AG04449 (cell line): ENCODE measurements at regions of chrX and their contacts with region 1.

Region 1: GRCh38 chrX:57821703-57822375 is 88.4 kb downstream of the ZXDA start:
- DNase-seq: peak; percentile 0
- H3K4me3 ChIP-seq: no peak overlapping the region
- CTCF ChIP-seq: peak; percentile 37

Region 2: DNA sequence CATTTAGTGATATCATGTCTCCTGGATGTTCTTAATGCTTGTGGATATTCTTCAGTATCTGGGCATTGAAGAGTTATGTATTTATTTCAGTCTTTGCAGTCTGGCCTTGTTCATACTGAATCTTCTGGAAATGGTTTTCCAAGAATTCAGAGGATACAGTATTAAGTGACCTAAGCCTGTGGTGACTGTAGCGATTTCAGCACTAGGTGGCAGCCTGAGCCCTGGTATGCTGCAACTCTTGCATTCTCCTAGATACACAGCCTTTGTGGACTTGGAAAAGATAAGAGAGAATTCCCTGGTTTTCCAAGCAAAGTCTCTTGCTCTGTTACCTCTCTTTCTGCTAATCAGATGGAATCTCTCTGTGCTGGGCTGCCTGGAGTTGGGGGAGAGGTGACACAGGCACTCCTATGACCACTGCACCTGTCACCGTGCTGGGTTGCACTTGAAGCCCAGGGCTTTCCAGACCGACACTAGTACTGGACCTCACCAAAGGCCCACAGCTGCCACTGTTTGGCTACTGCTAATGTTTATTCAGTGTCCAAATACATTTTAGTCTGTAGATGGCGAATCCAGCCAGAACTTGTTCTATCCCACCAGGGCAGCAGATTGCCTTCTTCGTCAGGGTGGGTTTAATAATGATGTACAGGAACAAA is 665.3 kb before region 1 on chrX:
- CTCF ChIA-PET with region 1: no interaction called
- POLR2A ChIA-PET with region 1: no interaction called
- DNase-seq: no peak
- H3K4me3 ChIP-seq: no peak overlapping the region
- CTCF ChIP-seq: peak; percentile 27

Region 3: DNA sequence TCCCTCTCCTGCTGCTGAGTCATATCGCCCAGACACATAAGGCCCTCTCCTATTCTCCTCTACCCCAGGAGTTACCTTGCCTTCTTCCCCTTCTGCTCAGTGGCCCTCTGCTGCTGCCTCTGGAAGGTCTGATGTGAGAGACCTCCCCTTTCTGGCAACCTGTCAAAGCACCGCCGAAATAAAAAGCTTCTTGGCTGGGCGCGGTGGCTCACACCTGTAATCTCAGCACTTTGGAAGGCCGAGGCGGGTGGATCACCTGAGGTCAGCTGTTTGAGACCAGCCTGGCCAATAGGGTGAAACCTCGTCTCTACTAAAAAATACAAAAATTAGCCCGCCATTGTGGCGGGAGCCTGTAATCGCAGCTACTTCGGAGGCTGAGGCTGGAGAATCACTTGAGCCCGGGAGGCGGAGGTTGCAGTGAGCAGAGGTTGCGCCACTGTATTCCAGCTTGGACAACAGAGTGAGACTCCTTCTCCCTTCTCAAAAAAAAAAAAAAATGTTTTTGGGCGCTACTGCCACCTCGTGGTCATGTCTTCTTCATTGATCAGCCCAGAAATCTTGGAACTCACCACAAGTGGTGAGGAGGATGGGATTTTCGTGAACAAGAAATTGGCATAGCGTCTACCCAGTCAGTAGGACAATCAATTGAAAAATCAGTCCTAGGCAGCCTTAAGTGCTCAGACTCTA is 97.1 kb after region 1 on chrX:
- CTCF ChIA-PET with region 1: interaction called, 18 read pairs
- POLR2A ChIA-PET with region 1: no interaction called
- DNase-seq: no peak
- H3K4me3 ChIP-seq: no peak overlapping the region
- CTCF ChIP-seq: peak; percentile 33

Region 4: GRCh38 chrX:57929373-57929772 is 107.5 kb after region 1 on chrX:
- CTCF ChIA-PET with region 1: interaction called, 12 read pairs
- POLR2A ChIA-PET with region 1: no interaction called
- DNase-seq: no peak
- H3K4me3 ChIP-seq: no peak overlapping the region
- CTCF ChIP-seq: peak; percentile 42